Prostate gland (tissue), 2 donors: ENCODE measurements at regions of chr22 and their contacts with region 1.

Region 1: GRCh38 chr22:17057959-17058814 is 26.6 kb upstream of the IL17RA start:
- DNase-seq: peak; percentile 72
- H3K4me3 ChIP-seq: no peak overlapping the region
- H3K27ac ChIP-seq: no peak overlapping the region
- H3K4me1 ChIP-seq: no peaks in the 10 kb centered on the region
- H3K27me3 ChIP-seq: no peaks in the 10 kb centered on the region
- CTCF ChIP-seq: peak; percentile 71 to 83 (median 82)
- POLR2A ChIP-seq: no peak

Region 2: GRCh38 chr22:16917144-16918003 is 140.8 kb before region 1 on chr22:
- intact Hi-C with region 1: loop called (anchors 10 kb)
- DNase-seq: peak; percentile 57
- H3K4me3 ChIP-seq: no peak overlapping the region
- H3K27ac ChIP-seq: no peak overlapping the region
- H3K4me1 ChIP-seq: no peaks in the 10 kb centered on the region
- H3K27me3 ChIP-seq: no peaks in the 10 kb centered on the region
- CTCF ChIP-seq: peak; percentile 28 to 61 (median 52)
- POLR2A ChIP-seq: no peak

Region 3: GRCh38 chr22:17098379-17098819 is 40.2 kb after region 1 on chr22:
- intact Hi-C with region 1: no loop called
- DNase-seq: no peak
- H3K4me3 ChIP-seq: no peak overlapping the region
- H3K27ac ChIP-seq: no peak overlapping the region
- H3K4me1 ChIP-seq: no peaks in the 10 kb centered on the region
- H3K27me3 ChIP-seq: no peaks in the 10 kb centered on the region
- CTCF ChIP-seq: no peak
- POLR2A ChIP-seq: no peak